Activated T-helper 2 cell treated with anti-CD3 and anti-CD28 coated beads, Interferon-gamma antibody, Interleukin-2, Interleukin-4, amounts not matched to agents 10 μg/mL and 5 μg/mL and 100 μg/mL, durations not matched to agents 14 hours and 24 hours and 36 hours (primary cell): ENCODE measurements at regions of chr2 and their contacts with region 1.

Region 1: DNA sequence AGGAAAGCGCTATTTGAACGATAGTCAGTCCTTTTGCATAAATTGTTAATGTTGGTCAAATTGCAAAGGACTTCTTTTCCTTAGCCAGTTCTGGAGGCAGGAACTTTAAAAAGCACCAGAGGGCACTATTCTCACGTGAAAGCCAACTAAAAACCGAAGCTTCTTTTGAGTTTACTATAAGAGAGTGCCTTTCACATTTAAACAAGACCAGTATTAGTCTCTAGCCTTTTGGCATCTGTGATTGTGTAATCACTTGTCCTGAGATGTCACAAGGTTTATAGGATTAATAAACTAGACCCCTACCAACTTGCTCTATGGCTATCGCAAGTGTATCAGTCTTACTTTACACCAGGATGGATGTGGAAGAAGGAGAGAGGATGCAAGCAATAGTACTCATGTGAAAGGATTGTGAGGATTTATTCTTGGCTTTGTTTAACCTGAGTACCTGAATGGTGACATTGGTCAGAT is 14.4 kb upstream of the STAT4 start:
- DNase-seq: no peak
- H3K4me3 Mint-ChIP-seq: no peak overlapping the region
- H3K27ac Mint-ChIP-seq: no peak overlapping the region
- H3K4me1 Mint-ChIP-seq: peaks cover 23% of the 10 kb centered on the region
- H3K27me3 Mint-ChIP-seq: peaks cover 12% of the 10 kb centered on the region

Region 2: DNA sequence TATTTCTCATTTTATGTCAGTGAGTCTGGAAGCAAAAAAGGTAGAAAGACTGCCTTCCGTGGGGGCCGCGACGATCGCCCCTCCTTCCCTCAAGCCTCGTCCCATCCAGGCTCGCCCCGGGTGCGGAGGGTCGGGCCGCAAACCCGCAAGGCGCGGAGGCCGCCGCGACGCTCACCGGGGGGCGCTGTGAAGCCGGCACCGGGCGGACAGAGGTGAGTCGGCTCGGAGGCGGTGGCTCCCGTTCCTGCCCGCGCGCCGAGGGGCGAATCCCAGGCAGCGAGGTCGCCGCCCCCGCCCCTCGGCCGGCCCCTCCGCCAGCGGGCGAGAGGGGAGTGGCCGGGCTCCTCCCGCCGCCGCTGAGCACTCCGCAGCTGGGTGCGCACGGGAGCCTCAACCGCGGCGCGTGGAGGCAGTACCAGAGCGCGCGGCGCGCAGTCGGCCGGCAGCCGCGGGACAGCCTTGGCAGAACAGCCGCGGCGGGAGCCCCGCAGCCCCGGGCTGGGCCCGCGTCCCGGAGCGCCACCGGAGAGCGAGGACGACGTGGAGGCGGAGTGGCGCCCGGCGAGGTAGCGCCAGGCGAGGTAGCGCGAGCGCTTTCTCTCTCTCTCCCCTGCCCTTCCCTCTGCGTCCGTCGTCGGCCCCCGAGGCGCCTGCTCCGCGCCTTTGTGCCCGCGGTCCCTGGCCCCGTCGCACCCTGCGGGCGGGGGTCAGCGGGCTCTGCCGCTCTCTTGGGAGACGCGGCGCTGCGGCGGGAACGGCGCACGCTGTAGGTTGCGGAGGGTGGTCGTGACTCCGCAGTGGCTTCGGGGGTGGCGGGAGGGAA is 80.0 kb after region 1 on chr2 and contains the start of gene MYO1B:
- intact Hi-C with region 1: loop called (anchors 2 kb)
- DNase-seq: peak; percentile 54
- H3K4me3 Mint-ChIP-seq: peak within 1 kb of the TSS; percentile 81
- H3K27ac Mint-ChIP-seq: peak within 1 kb of the TSS; percentile 9
- H3K4me1 Mint-ChIP-seq: peaks cover 12% of the 10 kb centered on the region
- H3K27me3 Mint-ChIP-seq: peaks cover 32% of the 10 kb centered on the region
- total RNA-seq, gene MYO1B: 7.0 and 12.2 TPM in 2 replicates

Region 3: DNA sequence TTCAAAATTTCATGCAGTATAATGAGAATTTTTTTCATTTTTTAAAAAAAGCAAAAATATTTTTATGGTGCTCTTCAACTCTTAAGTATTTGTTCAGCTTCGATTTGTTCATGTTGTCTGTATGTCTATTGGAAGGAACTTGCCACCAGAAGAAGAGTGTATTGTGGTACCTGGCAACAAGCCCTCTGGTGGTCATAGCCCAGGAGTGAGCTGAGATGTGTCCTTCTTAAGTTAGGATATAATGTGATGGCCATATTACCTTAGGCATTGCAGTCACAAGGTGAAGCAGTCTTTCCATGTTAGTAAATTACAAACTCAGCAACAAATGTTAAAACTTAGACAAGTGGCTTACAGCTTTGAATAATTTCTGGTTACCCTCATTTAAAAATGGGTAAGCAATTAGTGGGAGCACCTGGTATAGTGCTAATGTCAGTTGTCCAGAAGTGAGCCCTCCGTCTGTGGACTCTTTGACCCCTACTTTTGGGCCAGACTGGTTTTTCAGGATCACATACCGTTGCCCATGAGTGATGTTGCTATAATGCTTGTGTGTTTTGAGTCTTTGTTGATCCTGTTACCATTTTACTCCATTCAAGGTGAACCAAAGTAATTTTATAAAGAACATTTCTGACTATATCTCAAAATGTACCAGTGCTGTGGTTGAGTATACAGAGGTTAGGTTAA is 137.4 kb after region 1 on chr2:
- intact Hi-C with region 1: loop called (anchors 1 kb)
- DNase-seq: no peak
- H3K4me3 Mint-ChIP-seq: no peak overlapping the region
- H3K27ac Mint-ChIP-seq: no peak overlapping the region
- H3K4me1 Mint-ChIP-seq: no peaks in the 10 kb centered on the region
- H3K27me3 Mint-ChIP-seq: peaks cover 3% of the 10 kb centered on the region

Region 4: DNA sequence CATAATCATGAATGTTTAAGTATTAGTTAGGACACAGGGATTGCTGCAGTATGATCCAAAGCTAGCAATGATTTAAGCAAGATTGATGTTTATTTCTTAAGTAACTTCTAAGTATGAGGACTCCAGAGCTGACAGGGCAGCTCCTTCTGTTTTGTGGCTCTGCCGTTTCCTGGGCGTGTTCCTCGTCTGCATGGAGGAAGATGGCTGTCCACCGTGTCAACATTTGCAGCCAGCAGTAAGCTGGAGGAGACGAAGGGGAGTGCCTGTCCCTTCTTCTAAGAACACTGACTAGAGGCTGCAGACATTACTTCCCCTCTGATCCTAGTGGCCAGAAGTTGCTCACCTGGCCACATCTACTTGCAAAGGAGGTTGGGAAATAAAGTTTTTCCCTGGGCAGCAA is 224.1 kb after region 1 on chr2:
- intact Hi-C with region 1: no loop called
- DNase-seq: no peak
- H3K4me3 Mint-ChIP-seq: no peak overlapping the region
- H3K27ac Mint-ChIP-seq: no peak overlapping the region
- H3K4me1 Mint-ChIP-seq: peaks cover 9% of the 10 kb centered on the region
- H3K27me3 Mint-ChIP-seq: no peaks in the 10 kb centered on the region

Region 5: GRCh38 chr2:191521608-191522208 is 356.5 kb after region 1 on chr2:
- intact Hi-C with region 1: loop called (anchors 1 kb)
- DNase-seq: no peak
- H3K4me3 Mint-ChIP-seq: no peak overlapping the region
- H3K27ac Mint-ChIP-seq: no peak overlapping the region
- H3K4me1 Mint-ChIP-seq: no peaks in the 10 kb centered on the region
- H3K27me3 Mint-ChIP-seq: peaks cover 17% of the 10 kb centered on the region

Region 6: DNA sequence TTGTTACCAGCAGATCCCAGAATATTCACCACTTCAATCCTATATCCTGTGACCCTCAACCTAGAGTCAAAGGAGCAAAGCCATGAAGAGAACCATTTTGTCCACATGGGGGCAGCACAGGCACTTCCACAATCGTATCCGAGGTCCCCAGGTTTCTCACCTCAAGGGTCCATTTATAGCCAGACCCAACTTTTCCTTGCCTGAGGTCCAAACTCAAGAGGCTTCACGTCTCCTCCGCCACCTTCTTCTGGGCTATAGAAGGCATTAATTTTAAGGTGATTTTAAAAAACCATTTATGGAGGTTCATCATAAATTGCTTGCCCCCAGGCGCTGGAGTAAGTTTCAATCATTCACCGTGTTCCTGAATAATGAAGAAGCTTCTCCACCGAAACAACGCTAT is 401.1 kb after region 1 on chr2:
- intact Hi-C with region 1: loop called (anchors 2 kb)
- DNase-seq: peak; percentile 39
- H3K4me3 Mint-ChIP-seq: no peak overlapping the region
- H3K27ac Mint-ChIP-seq: no peak overlapping the region
- H3K4me1 Mint-ChIP-seq: peaks cover 34% of the 10 kb centered on the region
- H3K27me3 Mint-ChIP-seq: peaks cover 57% of the 10 kb centered on the region

Region 7: GRCh38 chr2:192162392-192163042 is 997.3 kb after region 1 on chr2:
- intact Hi-C with region 1: loop called (anchors 5 kb)
- DNase-seq: peak; percentile 20
- H3K4me3 Mint-ChIP-seq: no peak overlapping the region
- H3K27ac Mint-ChIP-seq: no peak overlapping the region
- H3K4me1 Mint-ChIP-seq: peaks cover 11% of the 10 kb centered on the region
- H3K27me3 Mint-ChIP-seq: peaks cover 24% of the 10 kb centered on the region